ENCODE measurements at regions of chr6 and their contacts with region 1.

Region 1: GRCh38 chr6:77466055-77466450 is 2.8 kb upstream of the HTR1B start:
- DNase-seq: no peak
- ATAC-seq: peak; percentile 83
- H3K4me3 ChIP-seq: peak overlapping the region; percentile 63
- H3K27ac ChIP-seq: no peak overlapping the region
- H3K4me1 ChIP-seq: no peaks in the 10 kb centered on the region
- H3K27me3 ChIP-seq: peaks cover 12 to 16% of the 10 kb centered on the region in 2 experiments
- CTCF ChIP-seq: peak; percentile 64 to 67 (median 65)
- EP300 ChIP-seq: no peak
- POLR2A ChIP-seq: no peak
- RAD21 ChIP-seq: peak; percentile 76

Region 2: GRCh38 chr6:75934643-75935472 is 1531.2 kb before region 1 on chr6:
- CTCF ChIA-PET with region 1: no interaction called
- POLR2A ChIA-PET with region 1: no interaction called
- RAD21 ChIA-PET with region 1: no interaction called
- SMC1A ChIA-PET with region 1: no interaction called
- in situ Hi-C with region 1: loop called (anchors 10 kb)
- intact Hi-C with region 1: loop called (anchors 10 kb)
- DNase-seq: peak; percentile 16
- ATAC-seq: peak; percentile 86
- H3K4me3 ChIP-seq: peak overlapping the region; percentile 14; the same call in 1 of the 2 replicates
- H3K27ac ChIP-seq: no peak overlapping the region
- H3K4me1 ChIP-seq: no peaks in the 10 kb centered on the region; the same call in 1 of the 2 replicates
- H3K27me3 ChIP-seq: peaks cover 0 to 2% of the 10 kb centered on the region in 2 experiments; a peak in 1 of 4 replicates
- CTCF ChIP-seq: peak; percentile 74 to 84 (median 76)
- EP300 ChIP-seq: no peak
- POLR2A ChIP-seq: no peak
- RAD21 ChIP-seq: peak; percentile 84

Region 3: GRCh38 chr6:77430504-77430903 is 35.5 kb before region 1 on chr6:
- CTCF ChIA-PET with region 1: no interaction called
- POLR2A ChIA-PET with region 1: no interaction called
- RAD21 ChIA-PET with region 1: no interaction called
- SMC1A ChIA-PET with region 1: no interaction called
- in situ Hi-C with region 1: no loop called
- intact Hi-C with region 1: no loop called
- DNase-seq: no peak
- ATAC-seq: no peak
- H3K4me3 ChIP-seq: no peak overlapping the region
- H3K27ac ChIP-seq: no peak overlapping the region
- H3K4me1 ChIP-seq: no peaks in the 10 kb centered on the region
- H3K27me3 ChIP-seq: no peaks in the 10 kb centered on the region
- CTCF ChIP-seq: no peak
- EP300 ChIP-seq: no peak
- POLR2A ChIP-seq: no peak
- RAD21 ChIP-seq: no peak

Region 4: GRCh38 chr6:77535172-77535571 is 69.1 kb after region 1 on chr6:
- CTCF ChIA-PET with region 1: interaction called, 40 read pairs
- POLR2A ChIA-PET with region 1: no interaction called
- RAD21 ChIA-PET with region 1: interaction called, 11 read pairs
- SMC1A ChIA-PET with region 1: interaction called, 44 read pairs
- in situ Hi-C with region 1: no loop called
- intact Hi-C with region 1: no loop called
- DNase-seq: no peak
- ATAC-seq: peak; percentile 15; the same call in 2 of the 3 replicates
- H3K4me3 ChIP-seq: no peak overlapping the region
- H3K27ac ChIP-seq: no peak overlapping the region
- H3K4me1 ChIP-seq: no peaks in the 10 kb centered on the region
- H3K27me3 ChIP-seq: no peaks in the 10 kb centered on the region
- CTCF ChIP-seq: no peak
- EP300 ChIP-seq: no peak
- POLR2A ChIP-seq: no peak
- RAD21 ChIP-seq: no peak

Region 5: DNA sequence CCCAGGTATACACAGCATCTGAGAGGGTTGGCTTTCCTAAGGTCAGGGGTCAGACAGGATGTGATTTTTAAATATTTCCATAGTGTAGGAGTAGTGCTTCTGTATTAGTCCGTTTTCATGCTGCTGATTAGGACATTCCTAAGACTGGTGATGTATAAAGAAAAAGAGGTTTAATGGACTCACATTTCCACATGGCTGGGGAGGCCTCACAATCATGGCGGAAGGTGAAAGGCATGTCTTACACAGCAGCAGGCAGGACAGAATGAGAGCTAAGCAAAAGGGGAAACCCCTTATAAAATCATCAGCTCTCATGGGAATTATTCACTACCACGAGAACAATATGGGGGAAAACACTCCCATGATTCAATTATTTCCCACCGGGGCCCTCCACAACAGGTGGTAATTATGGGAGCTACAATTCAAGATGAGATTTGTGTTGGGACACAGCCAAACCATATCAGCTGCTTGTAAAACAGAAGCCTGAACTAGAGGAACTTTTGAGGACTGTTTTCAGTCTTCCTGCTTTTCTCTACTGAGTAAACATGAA is 95.8 kb after region 1 on chr6:
- CTCF ChIA-PET with region 1: interaction called, 27 read pairs
- POLR2A ChIA-PET with region 1: interaction called, 6 read pairs
- RAD21 ChIA-PET with region 1: interaction called, 238 read pairs
- SMC1A ChIA-PET with region 1: interaction called, 25 read pairs
- in situ Hi-C with region 1: no loop called
- intact Hi-C with region 1: no loop called
- DNase-seq: no peak
- ATAC-seq: peak; percentile 50
- H3K4me3 ChIP-seq: no peak overlapping the region
- H3K27ac ChIP-seq: no peak overlapping the region
- H3K4me1 ChIP-seq: no peaks in the 10 kb centered on the region
- H3K27me3 ChIP-seq: no peaks in the 10 kb centered on the region
- CTCF ChIP-seq: no peak
- EP300 ChIP-seq: no peak
- POLR2A ChIP-seq: no peak
- RAD21 ChIP-seq: no peak

Region 6: GRCh38 chr6:77633471-77633870 is 167.4 kb after region 1 on chr6:
- CTCF ChIA-PET with region 1: no interaction called
- POLR2A ChIA-PET with region 1: no interaction called
- RAD21 ChIA-PET with region 1: no interaction called
- SMC1A ChIA-PET with region 1: no interaction called
- in situ Hi-C with region 1: no loop called
- intact Hi-C with region 1: no loop called
- DNase-seq: no peak
- ATAC-seq: no peak
- H3K4me3 ChIP-seq: no peak overlapping the region
- H3K27ac ChIP-seq: no peak overlapping the region
- H3K4me1 ChIP-seq: no peaks in the 10 kb centered on the region
- H3K27me3 ChIP-seq: no peaks in the 10 kb centered on the region
- CTCF ChIP-seq: no peak
- EP300 ChIP-seq: no peak
- POLR2A ChIP-seq: no peak
- RAD21 ChIP-seq: no peak

Region 7: DNA sequence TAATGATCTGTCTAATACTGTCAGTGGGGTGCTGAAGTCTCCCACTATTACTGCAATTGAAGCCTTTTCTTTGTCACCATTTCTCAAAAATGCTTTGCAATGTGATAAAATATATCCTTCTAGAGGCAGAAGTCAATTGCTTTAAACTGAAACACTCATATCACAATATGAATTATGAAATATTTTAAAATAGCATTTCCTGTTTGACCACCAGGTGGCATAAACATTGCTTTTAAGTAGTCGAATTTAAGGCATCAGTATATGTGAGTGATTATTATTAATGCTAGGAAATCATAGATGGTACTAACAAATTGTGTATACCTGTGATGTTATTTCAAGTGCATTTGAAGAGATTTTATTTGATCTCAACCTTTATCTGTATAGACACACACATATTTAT is 274.3 kb after region 1 on chr6:
- CTCF ChIA-PET with region 1: interaction called, 4 read pairs
- POLR2A ChIA-PET with region 1: no interaction called
- RAD21 ChIA-PET with region 1: interaction called, 6 read pairs
- SMC1A ChIA-PET with region 1: interaction called, 11 read pairs
- in situ Hi-C with region 1: no loop called
- intact Hi-C with region 1: no loop called
- DNase-seq: no peak
- ATAC-seq: peak; percentile 40; the same call in 2 of the 3 replicates
- H3K4me3 ChIP-seq: no peak overlapping the region
- H3K27ac ChIP-seq: no peak overlapping the region
- H3K4me1 ChIP-seq: no peaks in the 10 kb centered on the region
- H3K27me3 ChIP-seq: no peaks in the 10 kb centered on the region
- CTCF ChIP-seq: peak; percentile 19 to 51 (median 25); a peak in 5 of 6 replicates
- EP300 ChIP-seq: no peak
- POLR2A ChIP-seq: no peak
- RAD21 ChIP-seq: peak; percentile 29; the same call in 1 of the 2 replicates

Region 8: GRCh38 chr6:77829736-77830135 is 363.7 kb after region 1 on chr6:
- CTCF ChIA-PET with region 1: interaction called, 10 read pairs
- POLR2A ChIA-PET with region 1: no interaction called
- RAD21 ChIA-PET with region 1: no interaction called
- SMC1A ChIA-PET with region 1: no interaction called
- in situ Hi-C with region 1: no loop called
- intact Hi-C with region 1: no loop called
- DNase-seq: no peak
- ATAC-seq: no peak
- H3K4me3 ChIP-seq: no peak overlapping the region
- H3K27ac ChIP-seq: no peak overlapping the region
- H3K4me1 ChIP-seq: no peaks in the 10 kb centered on the region
- H3K27me3 ChIP-seq: no peaks in the 10 kb centered on the region
- CTCF ChIP-seq: no peak
- EP300 ChIP-seq: no peak
- POLR2A ChIP-seq: no peak
- RAD21 ChIP-seq: no peak

Region 9: GRCh38 chr6:78611958-78612357 is 1145.9 kb after region 1 on chr6:
- CTCF ChIA-PET with region 1: no interaction called
- POLR2A ChIA-PET with region 1: no interaction called
- RAD21 ChIA-PET with region 1: no interaction called
- SMC1A ChIA-PET with region 1: interaction called, 4 read pairs
- in situ Hi-C with region 1: loop called (anchors 10 kb)
- intact Hi-C with region 1: no loop called
- DNase-seq: no peak
- ATAC-seq: peak; percentile 71
- H3K4me3 ChIP-seq: no peak overlapping the region
- H3K27ac ChIP-seq: no peak overlapping the region
- H3K4me1 ChIP-seq: no peaks in the 10 kb centered on the region
- H3K27me3 ChIP-seq: no peaks in the 10 kb centered on the region
- CTCF ChIP-seq: peak; percentile 29 to 53 (median 42); a peak in 4 of 6 replicates
- EP300 ChIP-seq: no peak
- POLR2A ChIP-seq: no peak
- RAD21 ChIP-seq: peak; percentile 32; the same call in 1 of the 2 replicates